Transverse colon (tissue), 4 donors: ENCODE measurements at regions of chr10 and their contacts with region 1.

Region 1: DNA sequence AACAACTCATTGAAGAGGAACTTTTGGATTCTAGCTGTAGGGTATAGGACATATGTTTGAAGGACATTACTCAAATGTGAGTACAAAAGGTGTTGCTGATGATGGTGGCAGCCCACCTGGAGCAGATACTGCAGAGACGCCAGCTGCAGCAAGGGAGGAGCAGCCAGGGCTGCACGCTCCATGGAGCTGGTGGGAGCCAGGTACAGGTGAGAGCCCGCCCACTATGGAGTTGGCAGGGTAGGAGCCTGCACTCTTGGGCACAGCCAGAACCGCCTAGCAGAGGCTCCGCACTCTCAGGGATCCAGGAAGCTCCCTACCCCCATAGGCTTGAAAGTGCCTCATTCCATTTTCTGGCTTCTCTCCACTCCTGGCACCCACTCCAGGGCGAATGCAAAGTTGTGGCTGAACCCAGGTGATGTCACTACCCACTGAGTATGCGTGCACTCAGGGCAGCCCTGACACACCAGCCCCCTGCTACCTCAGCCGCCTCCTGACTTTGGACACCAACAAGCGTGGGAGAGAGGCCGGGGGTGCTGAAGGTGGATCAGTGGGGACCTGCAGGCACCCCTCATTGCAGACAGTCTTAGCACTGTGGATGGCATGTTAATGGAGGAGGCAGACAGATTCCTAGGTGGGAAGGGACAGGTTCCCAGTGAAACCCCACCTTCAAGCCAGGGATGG is 761.1 kb downstream of the IPMK start:
- DNase-seq: no peak
- H3K4me3 ChIP-seq: no peak overlapping the region
- H3K27ac ChIP-seq: no peak overlapping the region
- H3K4me1 ChIP-seq: no peaks in the 10 kb centered on the region
- H3K27me3 ChIP-seq: no peaks in the 10 kb centered on the region
- CTCF ChIP-seq: no peak
- EP300 ChIP-seq: no peak
- POLR2A ChIP-seq: no peak

Region 2: DNA sequence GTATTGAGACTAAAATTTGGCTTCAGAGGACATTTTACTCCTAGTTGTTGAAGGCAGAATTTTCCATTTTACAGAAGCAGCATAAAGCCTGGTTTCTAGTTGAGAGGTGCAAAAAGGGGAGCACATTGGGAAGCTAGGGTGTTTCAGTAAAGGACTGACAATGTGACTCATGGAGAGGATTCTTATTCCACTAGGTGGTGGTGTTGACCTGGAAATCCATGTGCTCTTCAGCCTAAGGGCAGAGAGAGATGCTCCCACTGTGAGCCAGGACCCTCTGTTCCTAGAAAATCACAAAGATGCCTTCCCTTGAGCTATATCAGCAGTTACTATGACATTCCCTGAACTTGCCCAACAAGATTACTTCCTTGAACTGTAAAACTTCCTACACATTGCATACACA is 73.4 kb after region 1 on chr10:
- in situ Hi-C with region 1: no loop called
- intact Hi-C with region 1: loop called (anchors 1 kb)
- DNase-seq: no peak
- H3K4me3 ChIP-seq: no peak overlapping the region
- H3K27ac ChIP-seq: no peak overlapping the region
- H3K4me1 ChIP-seq: no peaks in the 10 kb centered on the region
- H3K27me3 ChIP-seq: no peaks in the 10 kb centered on the region
- CTCF ChIP-seq: peak in 2 of 5 experiments; percentile 11 to 23
- EP300 ChIP-seq: no peak
- POLR2A ChIP-seq: no peak